Heart left ventricle (tissue), 16 donors: ENCODE measurements at regions of chr15 and their contacts with region 1.

Region 1: DNA sequence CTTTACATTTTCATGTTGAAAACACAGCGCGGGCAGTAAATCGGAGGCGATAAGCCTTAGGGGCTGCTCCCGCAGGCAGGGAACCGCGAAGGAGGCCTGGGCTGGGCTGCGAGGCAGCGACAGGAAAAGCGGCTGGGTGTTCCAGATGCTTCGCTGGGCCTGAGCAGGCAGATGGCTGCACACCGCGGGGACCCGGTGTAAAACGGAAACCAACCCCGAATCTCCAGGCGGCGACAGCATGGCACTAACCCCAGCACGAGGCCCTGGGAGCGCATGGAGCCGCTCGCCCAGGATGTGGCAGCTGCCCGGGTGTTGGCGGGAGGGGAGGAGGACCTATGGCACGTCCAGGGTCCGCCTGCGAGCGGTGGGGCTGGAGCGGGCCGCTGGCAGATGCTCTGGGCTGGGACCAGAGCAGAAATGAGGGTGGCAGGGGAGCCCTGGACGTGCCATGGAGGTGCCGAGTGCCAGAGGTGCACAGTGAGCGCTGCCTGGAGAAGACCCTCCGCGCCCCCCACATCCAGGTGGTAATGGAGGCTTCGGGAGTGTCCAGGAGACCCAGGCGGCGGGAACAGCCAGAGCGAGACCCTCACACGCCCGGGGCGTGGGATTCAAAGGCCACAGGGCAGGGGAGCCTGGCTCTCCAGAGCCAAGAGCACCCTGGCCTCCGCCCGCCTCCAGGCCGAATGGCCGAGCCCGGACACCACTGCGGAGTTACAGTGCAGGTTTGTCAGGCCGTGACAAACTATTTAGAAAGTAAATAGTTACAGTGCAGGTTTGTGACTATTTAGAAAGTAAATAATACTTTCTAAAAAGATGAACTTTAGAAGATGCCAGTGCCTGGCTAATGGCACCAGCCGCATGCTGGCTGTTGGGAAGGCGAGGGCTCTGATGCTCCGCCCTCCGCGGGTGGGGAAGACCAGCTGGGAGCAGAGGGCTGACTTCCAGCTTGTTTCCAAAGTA is 293.6 kb downstream of the OCA2 start:
- DNase-seq: no peak
- ATAC-seq: no peak
- H3K4me3 ChIP-seq: no peak overlapping the region
- H3K27ac ChIP-seq: no peak overlapping the region
- H3K4me1 ChIP-seq: no peaks in the 10 kb centered on the region
- H3K27me3 ChIP-seq: no peaks in the 10 kb centered on the region
- CTCF ChIP-seq: no peak
- POLR2A ChIP-seq: no peak

Region 2: GRCh38 chr15:27527490-27528067 is 278.0 kb before region 1 on chr15:
- intact Hi-C with region 1: loop called in 1 of 10 experiments (anchors 10 kb)
- DNase-seq: no peak
- ATAC-seq: no peak
- H3K4me3 ChIP-seq: no peak overlapping the region
- H3K27ac ChIP-seq: no peak overlapping the region
- H3K4me1 ChIP-seq: no peaks in the 10 kb centered on the region
- H3K27me3 ChIP-seq: no peaks in the 10 kb centered on the region
- CTCF ChIP-seq: no peak
- POLR2A ChIP-seq: no peak

Region 3: GRCh38 chr15:27638958-27639357 is 166.6 kb before region 1 on chr15:
- intact Hi-C with region 1: loop called in 1 of 10 experiments (anchors 5 kb)
- DNase-seq: no peak
- ATAC-seq: no peak
- H3K4me3 ChIP-seq: no peak overlapping the region
- H3K27ac ChIP-seq: no peak overlapping the region
- H3K4me1 ChIP-seq: no peaks in the 10 kb centered on the region
- H3K27me3 ChIP-seq: peaks cover 0 to 3% (median 0%) of the 10 kb centered on the region in 9 donors
- CTCF ChIP-seq: no peak
- POLR2A ChIP-seq: no peak

Region 4: GRCh38 chr15:27977696-27978095 is 172.2 kb after region 1 on chr15:
- intact Hi-C with region 1: no loop called
- DNase-seq: no peak
- ATAC-seq: no peak
- H3K4me3 ChIP-seq: no peak overlapping the region
- H3K27ac ChIP-seq: no peak overlapping the region
- H3K4me1 ChIP-seq: no peaks in the 10 kb centered on the region
- H3K27me3 ChIP-seq: no peaks in the 10 kb centered on the region
- CTCF ChIP-seq: no peak
- POLR2A ChIP-seq: no peak